ENCODE measurements at regions of chr1 and their contacts with region 1.

Region 1: DNA sequence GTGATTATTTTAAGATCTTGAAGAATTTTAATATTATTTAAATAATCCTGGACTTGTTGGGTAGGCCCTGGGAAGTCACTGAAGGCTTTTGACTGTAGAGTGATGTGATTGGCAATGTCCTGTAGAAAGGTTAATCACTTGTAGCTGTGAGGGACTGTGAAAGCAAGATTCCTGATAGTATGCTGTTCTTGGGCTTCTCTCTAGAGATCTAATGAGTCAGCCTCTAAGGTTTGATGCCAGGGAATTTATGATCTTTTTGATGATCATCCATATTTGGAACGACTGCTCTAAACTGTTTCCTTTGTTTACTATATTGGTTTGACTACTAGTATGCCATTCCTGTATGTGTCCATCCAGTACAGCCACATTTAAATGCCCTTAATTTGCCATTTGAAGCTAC is 56.5 kb downstream of the CAMSAP2 start:
- DNase-seq: peak; percentile 42
- H3K4me3 Mint-ChIP-seq: no peak overlapping the region
- H3K27ac Mint-ChIP-seq: peak overlapping the region; percentile 1
- H3K4me1 Mint-ChIP-seq: peaks cover 36% of the 10 kb centered on the region
- H3K27me3 Mint-ChIP-seq: no peaks in the 10 kb centered on the region
- CTCF ChIP-seq: no peak

Region 2: DNA sequence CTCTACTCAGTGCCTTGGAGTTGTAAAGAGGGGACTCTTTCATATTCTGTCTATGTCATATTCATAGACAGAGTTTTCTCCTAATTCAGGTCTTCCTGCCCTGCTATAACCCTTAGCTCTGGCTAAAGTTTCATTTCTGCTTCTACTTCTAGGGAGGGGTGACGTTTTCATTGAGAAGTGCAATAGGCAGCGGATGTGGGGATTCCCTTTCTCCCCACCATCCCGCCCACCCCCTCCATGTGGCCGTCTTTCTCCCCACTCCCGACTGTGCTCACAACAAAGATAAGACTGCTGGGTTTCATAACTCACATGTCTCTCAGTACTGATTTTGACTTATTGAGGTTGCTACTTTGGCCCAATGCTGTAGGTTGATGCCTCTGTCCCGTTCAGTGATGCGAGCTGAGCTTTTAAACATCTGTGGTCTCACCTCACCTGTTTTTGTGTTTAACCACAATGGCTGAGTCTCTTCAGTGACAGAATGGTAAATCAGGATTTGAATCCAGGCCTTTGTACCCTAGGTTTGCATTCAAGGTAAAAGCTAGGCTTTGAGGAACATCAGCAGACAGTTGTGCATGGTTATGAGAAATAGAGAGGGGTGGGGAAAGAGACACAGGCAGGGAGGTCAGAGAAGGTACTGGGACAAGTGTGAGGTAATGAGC is 166.8 kb before region 1 on chr1:
- CTCF ChIA-PET with region 1: interaction called, 25 read pairs
- POLR2A ChIA-PET with region 1: interaction called, 59 read pairs
- intact Hi-C with region 1: no loop called
- DNase-seq: no peak
- H3K4me3 Mint-ChIP-seq: no peak overlapping the region
- H3K27ac Mint-ChIP-seq: no peak overlapping the region
- H3K4me1 Mint-ChIP-seq: peaks cover 10% of the 10 kb centered on the region
- H3K27me3 Mint-ChIP-seq: no peaks in the 10 kb centered on the region
- CTCF ChIP-seq: no peak

Region 3: GRCh38 chr1:200774735-200775444 is 20.3 kb before region 1 on chr1:
- CTCF ChIA-PET with region 1: interaction called, 9 read pairs
- POLR2A ChIA-PET with region 1: interaction called, 79 read pairs
- intact Hi-C with region 1: no loop called
- DNase-seq: no peak
- H3K4me3 Mint-ChIP-seq: no peak overlapping the region
- H3K27ac Mint-ChIP-seq: peak overlapping the region; percentile 16
- H3K4me1 Mint-ChIP-seq: peaks cover 49% of the 10 kb centered on the region
- H3K27me3 Mint-ChIP-seq: no peaks in the 10 kb centered on the region
- CTCF ChIP-seq: no peak

Region 4: GRCh38 chr1:200780545-200781369 is 14.4 kb before region 1 on chr1:
- CTCF ChIA-PET with region 1: interaction called, 5 read pairs
- POLR2A ChIA-PET with region 1: interaction called, 79 read pairs
- intact Hi-C with region 1: no loop called
- DNase-seq: peak; percentile 38
- H3K4me3 Mint-ChIP-seq: peak overlapping the region; percentile 70
- H3K27ac Mint-ChIP-seq: peak overlapping the region; percentile 88
- H3K4me1 Mint-ChIP-seq: peaks cover 41% of the 10 kb centered on the region
- H3K27me3 Mint-ChIP-seq: no peaks in the 10 kb centered on the region
- CTCF ChIP-seq: no peak

Measured in MCF 10A (cell line).